ENCODE measurements at regions of chr13 and their contacts with region 1.

Region 1: DNA sequence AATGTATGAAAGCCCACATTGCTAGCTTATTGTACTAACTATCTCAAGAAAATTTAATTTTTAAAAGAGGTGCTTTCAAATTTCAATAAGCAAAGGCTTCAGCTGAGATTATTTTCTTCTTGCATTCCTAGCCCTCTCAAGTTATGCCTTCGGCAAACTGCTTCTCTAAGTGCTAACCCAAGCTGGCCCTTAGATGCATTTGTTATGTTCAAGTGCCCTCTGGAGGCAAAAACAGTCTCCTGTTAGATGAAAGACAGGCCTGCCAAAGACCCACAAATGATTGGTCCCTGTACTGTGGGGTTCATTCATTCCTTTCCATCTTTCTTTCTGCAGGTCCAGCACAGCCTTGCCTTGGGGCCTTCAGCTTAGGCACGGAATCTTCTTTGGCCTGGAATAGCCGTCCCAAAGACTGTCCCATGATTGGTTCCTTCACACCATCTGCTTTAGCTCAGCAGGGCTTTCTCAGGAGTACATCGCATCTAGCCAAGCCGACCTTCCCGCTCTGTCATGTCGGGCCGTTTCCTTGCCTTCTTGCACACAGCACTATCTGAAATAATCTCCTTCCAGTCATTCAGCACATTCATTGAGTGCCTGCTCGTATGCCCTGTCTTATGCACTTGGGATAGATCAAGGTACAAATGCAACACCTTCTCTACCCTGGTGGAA is 26.4 kb upstream of the TPTE2 start:
- DNase-seq: peak; percentile 59
- H3K4me3 Mint-ChIP-seq: no peak overlapping the region
- H3K27ac Mint-ChIP-seq: no peak overlapping the region
- H3K4me1 Mint-ChIP-seq: peaks cover 18% of the 10 kb centered on the region
- H3K27me3 Mint-ChIP-seq: no peaks in the 10 kb centered on the region
- CTCF ChIP-seq: peak; percentile 72

Region 2: GRCh38 chr13:19573120-19573716 is 14.6 kb before region 1 on chr13:
- CTCF ChIA-PET with region 1: interaction called, 26 read pairs
- POLR2A ChIA-PET with region 1: no interaction called
- intact Hi-C with region 1: no loop called
- DNase-seq: no peak
- H3K4me3 Mint-ChIP-seq: no peak overlapping the region
- H3K27ac Mint-ChIP-seq: no peak overlapping the region
- H3K4me1 Mint-ChIP-seq: no peaks in the 10 kb centered on the region
- H3K27me3 Mint-ChIP-seq: peaks cover 8% of the 10 kb centered on the region
- CTCF ChIP-seq: no peak

Region 3: GRCh38 chr13:19601749-19602725 is 14.3 kb after region 1 on chr13:
- CTCF ChIA-PET with region 1: interaction called, 13 read pairs
- POLR2A ChIA-PET with region 1: interaction called, 3 read pairs
- intact Hi-C with region 1: no loop called
- DNase-seq: peak; percentile 46
- H3K4me3 Mint-ChIP-seq: peak overlapping the region; percentile 69
- H3K27ac Mint-ChIP-seq: no peak overlapping the region
- H3K4me1 Mint-ChIP-seq: peaks cover 12% of the 10 kb centered on the region
- H3K27me3 Mint-ChIP-seq: no peaks in the 10 kb centered on the region
- CTCF ChIP-seq: no peak

Region 4: DNA sequence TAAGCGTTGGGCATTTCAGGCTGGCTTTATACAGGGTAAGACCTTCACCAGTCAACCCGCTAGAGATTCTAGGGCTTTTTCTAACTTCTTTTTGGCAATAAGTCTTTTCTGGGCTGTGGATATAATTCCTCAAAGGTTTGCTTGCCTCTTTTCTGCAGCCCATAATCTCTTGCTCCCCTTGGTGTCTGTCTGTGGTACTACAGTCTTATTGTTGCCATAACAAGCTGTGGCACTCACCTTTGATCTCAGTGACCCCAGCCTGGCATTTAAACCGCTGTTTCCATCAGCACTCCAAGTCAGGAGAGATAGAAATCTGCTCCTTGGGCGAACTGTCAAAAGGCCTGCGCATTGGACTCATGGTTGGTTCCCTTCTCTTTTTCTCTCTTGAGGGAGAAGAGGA is 31.2 kb after region 1 on chr13:
- CTCF ChIA-PET with region 1: interaction called, 24 read pairs
- POLR2A ChIA-PET with region 1: no interaction called
- intact Hi-C with region 1: no loop called
- DNase-seq: peak; percentile 53
- H3K4me3 Mint-ChIP-seq: no peak overlapping the region
- H3K27ac Mint-ChIP-seq: no peak overlapping the region
- H3K4me1 Mint-ChIP-seq: no peaks in the 10 kb centered on the region
- H3K27me3 Mint-ChIP-seq: no peaks in the 10 kb centered on the region
- CTCF ChIP-seq: peak; percentile 61

Region 5: DNA sequence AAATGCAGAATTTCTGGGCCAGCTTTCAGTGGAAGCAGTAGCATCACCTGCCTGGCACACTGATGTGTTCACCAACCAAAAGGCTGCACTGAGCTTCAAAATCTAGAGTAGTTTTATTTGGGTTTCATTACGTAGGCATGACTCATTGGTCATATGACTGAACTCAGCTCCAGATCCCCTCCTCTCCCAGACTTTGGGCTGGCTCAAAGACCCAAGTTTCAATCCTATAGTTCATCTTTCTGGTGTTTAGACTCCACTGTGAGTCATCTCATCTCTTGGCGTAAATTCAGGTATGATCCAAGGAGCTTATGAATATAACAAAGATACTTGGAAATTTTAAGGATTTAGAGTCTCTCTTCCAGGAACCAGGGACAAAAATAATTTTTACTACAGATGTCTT is 258.0 kb after region 1 on chr13:
- CTCF ChIA-PET with region 1: no interaction called
- POLR2A ChIA-PET with region 1: no interaction called
- intact Hi-C with region 1: no loop called
- DNase-seq: peak; percentile 97
- H3K4me3 Mint-ChIP-seq: no peak overlapping the region
- H3K27ac Mint-ChIP-seq: no peak overlapping the region
- H3K4me1 Mint-ChIP-seq: peaks cover 6% of the 10 kb centered on the region
- H3K27me3 Mint-ChIP-seq: no peaks in the 10 kb centered on the region
- CTCF ChIP-seq: no peak

Region 6: DNA sequence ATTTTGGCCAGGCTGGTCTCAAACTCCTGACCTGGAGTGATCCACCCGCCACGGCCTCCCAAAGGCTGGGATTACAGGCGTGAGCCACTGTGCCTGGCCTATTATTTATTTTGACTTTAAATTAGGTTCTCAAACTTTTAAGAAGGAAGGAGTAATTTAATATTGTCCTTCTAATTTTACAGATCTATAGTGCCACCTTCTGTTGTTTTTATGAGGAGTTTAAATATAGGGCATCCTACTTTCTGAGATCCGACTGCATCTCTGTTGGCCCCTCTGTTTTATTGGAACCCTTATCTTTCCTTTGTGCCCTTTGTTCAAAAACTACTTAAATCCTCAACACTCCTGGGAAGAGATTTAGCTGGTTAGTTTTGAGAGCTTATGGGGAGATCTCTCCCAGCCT is 301.0 kb after region 1 on chr13:
- CTCF ChIA-PET with region 1: interaction called, 8 read pairs
- POLR2A ChIA-PET with region 1: no interaction called
- intact Hi-C with region 1: loop called (anchors 10 kb)
- DNase-seq: peak; percentile 22
- H3K4me3 Mint-ChIP-seq: no peak overlapping the region
- H3K27ac Mint-ChIP-seq: no peak overlapping the region
- H3K4me1 Mint-ChIP-seq: no peaks in the 10 kb centered on the region
- H3K27me3 Mint-ChIP-seq: no peaks in the 10 kb centered on the region
- CTCF ChIP-seq: peak; percentile 24

Measured in MCF 10A (cell line).